Right cardiac atrium (tissue), 5 donors: ENCODE measurements at regions of chr10 and their contacts with region 1.

Region 1: GRCh38 chr10:104353325-104354048 is at the start of gene CFAP58:
- DNase-seq: peak; percentile 94 to 97 (median 96)
- ATAC-seq: peak; percentile 95
- H3K4me3 ChIP-seq: peak within 1 kb of the TSS; percentile 24
- H3K27ac ChIP-seq: no peak within 1 kb of the TSS
- H3K4me1 ChIP-seq: peaks cover 3% of the 10 kb centered on the region
- H3K27me3 ChIP-seq: no peaks in the 10 kb centered on the region
- total RNA-seq, gene CFAP58: 2.9 to 5.4 (median 3.4) TPM

Region 2: DNA sequence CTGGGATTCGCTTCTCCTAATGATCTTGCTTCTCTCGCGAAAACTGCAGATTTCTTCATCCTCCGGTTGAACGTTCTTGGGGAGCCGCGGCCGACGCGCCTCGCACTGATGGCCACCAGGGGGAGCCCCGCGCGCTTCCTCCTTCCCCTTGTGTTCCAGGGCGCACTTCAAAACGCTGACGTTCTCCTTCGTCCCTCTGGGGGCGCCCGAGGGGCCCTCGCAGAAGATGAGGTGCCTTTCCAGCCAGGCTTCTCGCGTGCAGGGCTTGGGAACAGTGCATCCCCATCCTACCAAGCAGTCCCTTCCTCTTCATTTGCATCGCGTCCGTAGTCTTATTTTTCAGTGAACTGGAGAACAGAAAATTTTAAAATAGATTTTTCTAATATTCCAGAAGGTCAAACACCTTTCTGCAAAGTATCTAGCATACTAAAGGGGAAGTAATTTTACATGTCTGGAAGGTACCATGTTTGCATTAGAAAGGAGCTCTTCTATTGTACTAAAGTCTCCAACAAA is 62.0 kb before region 1 on chr10:
- intact Hi-C with region 1: loop called in 3 of 4 experiments (anchors 2 to 5 kb)
- DNase-seq: peak; percentile 91 to 96 (median 95)
- ATAC-seq: peak; percentile 93 to 94
- H3K4me3 ChIP-seq: no peak overlapping the region
- H3K27ac ChIP-seq: no peak overlapping the region
- H3K4me1 ChIP-seq: no peaks in the 10 kb centered on the region
- H3K27me3 ChIP-seq: no peaks in the 10 kb centered on the region

Region 3: GRCh38 chr10:104300736-104301292 is 52.7 kb before region 1 on chr10:
- intact Hi-C with region 1: loop called in 2 of 4 experiments (anchors 5 kb)
- DNase-seq: peak; percentile 81 to 85 (median 84)
- ATAC-seq: peak; percentile 69 to 83
- H3K4me3 ChIP-seq: no peak overlapping the region
- H3K27ac ChIP-seq: peak overlapping the region; percentile 100
- H3K4me1 ChIP-seq: peaks cover 25% of the 10 kb centered on the region
- H3K27me3 ChIP-seq: no peaks in the 10 kb centered on the region

Region 4: DNA sequence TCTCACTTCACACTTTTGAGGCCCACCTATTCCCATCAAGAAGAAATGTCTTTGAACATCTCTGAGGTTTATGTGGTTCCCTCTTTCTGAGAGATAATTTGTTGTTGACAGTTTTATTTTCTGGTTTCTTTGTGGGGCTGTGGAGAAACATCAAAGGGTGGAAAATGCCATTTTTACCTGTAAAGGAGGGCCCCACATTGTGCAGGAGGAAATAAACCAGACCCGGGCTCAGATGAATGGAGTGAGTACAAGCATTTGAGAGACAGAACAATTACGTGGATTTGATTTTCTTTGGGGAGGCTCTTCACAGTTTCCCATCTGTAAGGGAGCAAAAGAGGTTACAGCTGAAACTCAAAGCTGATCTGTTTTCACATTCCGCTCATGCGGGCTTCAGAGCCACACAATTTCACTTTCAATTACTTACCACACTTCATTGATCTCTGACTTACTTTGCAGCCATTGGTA is 45.0 kb before region 1 on chr10:
- intact Hi-C with region 1: loop called in 3 of 4 experiments (anchors 5 kb)
- DNase-seq: no peak
- ATAC-seq: no peak
- H3K4me3 ChIP-seq: no peak overlapping the region
- H3K27ac ChIP-seq: peak overlapping the region; percentile 12
- H3K4me1 ChIP-seq: peaks cover 34% of the 10 kb centered on the region
- H3K27me3 ChIP-seq: no peaks in the 10 kb centered on the region

Region 5: DNA sequence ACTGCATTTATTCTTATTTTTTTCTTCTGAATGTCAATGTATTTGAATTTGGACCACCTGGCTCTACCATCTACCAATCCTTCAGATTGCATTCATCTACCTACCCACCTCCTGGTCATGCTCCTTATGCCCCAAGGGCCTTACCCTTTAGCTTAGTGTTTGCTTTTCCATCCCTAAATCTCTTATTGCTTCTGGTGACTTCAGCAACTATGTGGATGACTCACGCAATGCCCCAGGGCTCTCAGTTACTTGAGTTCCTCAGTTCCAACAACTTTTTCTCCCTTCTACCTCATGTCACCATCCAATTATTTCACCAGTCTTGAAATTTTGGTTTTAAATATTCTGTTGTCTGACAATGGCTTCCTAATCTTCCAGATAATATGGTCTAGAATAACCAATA is 119.0 kb after region 1 on chr10:
- intact Hi-C with region 1: no loop called
- DNase-seq: no peak
- ATAC-seq: no peak
- H3K4me3 ChIP-seq: no peak overlapping the region
- H3K27ac ChIP-seq: no peak overlapping the region
- H3K4me1 ChIP-seq: no peaks in the 10 kb centered on the region
- H3K27me3 ChIP-seq: no peaks in the 10 kb centered on the region